Colonic mucosa (tissue), 4 donors: ENCODE measurements at regions of chr18 and their contacts with region 1.

Region 1: DNA sequence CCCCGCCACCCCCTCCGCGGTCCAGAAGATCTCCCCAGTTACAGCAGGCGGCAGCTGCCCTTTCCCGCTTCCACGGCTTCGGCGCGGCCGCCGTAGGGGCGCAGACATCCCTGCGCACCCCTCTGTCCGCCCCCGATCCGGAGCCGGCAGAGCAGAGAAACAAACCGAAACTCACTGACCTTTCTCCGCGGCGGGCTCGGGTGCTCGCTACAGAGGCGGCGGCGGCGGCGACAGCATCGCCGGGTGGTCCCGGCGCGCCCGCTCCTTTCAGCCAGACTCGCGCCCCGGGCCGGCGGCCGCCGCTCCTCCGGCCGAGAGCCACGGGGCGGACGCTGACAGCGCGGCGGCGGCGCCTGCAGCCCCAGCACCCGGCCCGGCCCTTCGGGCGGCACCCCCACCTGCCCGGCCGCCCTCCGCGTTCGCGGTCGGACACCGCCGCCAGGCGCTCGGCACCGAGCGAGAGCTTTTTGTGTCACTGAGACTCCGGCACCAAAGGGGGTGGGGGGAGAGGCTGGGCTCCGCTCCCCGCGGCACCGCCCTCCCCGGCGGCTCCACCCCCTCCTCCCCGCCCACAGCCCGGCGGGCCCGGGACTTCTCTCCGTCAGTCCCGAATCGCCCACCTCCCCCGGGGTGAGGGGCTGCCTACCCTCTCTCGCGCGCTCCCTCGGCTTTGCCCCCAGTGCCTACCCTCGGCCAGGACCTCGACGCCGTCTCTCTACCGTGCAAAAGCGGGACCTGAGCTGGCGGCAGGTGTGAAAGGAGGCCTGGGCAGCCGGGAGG is 1.4 kb upstream of the RNF152 start:
- DNase-seq: peak; percentile 88
- H3K4me3 ChIP-seq: peak overlapping the region; percentile 82
- H3K27ac ChIP-seq: peak overlapping the region; percentile 60
- H3K4me1 ChIP-seq: no peaks in the 10 kb centered on the region
- H3K27me3 ChIP-seq: peaks cover 6% of the 10 kb centered on the region
- CTCF ChIP-seq: no peak

Region 2: DNA sequence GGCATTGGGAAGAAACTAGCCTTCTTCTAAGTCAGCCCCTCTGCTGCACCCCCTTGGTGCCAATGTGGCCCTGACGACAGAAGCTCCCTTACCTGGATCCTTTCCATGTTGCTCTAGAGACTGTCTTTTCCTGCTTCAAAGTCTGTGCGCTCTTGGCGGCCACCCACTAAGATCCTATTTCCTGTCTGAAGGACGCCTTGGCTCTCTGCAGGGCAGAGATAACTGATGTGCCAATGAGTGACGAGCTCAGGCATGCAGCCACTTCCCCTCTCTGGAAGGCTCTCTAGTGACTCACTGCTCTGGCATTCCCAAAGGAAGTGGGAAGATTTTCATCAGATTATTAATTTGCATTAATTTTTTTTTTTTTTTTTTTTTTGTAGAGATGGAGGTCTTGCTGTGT is 287.4 kb before region 1 on chr18:
- intact Hi-C with region 1: no loop called
- DNase-seq: peak; percentile 33
- H3K4me3 ChIP-seq: no peak overlapping the region
- H3K27ac ChIP-seq: no peak overlapping the region
- H3K4me1 ChIP-seq: no peaks in the 10 kb centered on the region
- H3K27me3 ChIP-seq: no peaks in the 10 kb centered on the region
- CTCF ChIP-seq: no peak

Region 3: DNA sequence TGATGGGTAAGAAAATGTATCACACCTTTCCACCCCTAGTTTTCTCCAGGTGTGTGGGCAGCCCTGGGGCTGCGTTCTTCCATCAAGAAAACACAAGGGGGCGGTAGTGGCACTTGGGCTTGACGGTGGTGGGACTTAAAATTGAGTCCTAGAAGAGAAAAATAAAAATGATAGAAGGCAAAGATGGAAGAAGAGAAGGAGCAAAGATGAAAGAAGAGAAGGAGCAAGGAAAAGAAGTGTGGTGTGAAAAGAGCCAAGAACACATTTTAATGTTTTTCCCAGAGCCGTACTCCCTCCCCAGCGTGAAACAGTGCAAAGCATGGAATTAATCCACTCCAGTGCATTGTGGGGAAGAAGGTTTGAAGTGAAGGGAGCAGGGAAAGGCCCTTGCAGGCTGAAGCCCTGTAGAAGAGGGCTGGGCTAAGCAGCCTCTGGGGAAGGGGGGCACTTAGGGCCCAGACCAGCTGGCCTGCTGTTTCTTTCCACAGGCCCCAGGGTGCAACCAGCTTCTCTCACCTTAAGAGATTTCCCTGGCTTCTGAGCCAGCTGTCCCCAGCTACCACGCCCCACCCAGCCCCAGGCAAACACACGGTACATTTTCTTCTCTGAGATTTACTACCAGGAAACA is 258.1 kb before region 1 on chr18:
- intact Hi-C with region 1: loop called (anchors 2 kb)
- DNase-seq: peak; percentile 86
- H3K4me3 ChIP-seq: no peak overlapping the region
- H3K27ac ChIP-seq: peak overlapping the region; percentile 86
- H3K4me1 ChIP-seq: peaks cover 13% of the 10 kb centered on the region
- H3K27me3 ChIP-seq: no peaks in the 10 kb centered on the region
- CTCF ChIP-seq: peak; percentile 78

Region 4: DNA sequence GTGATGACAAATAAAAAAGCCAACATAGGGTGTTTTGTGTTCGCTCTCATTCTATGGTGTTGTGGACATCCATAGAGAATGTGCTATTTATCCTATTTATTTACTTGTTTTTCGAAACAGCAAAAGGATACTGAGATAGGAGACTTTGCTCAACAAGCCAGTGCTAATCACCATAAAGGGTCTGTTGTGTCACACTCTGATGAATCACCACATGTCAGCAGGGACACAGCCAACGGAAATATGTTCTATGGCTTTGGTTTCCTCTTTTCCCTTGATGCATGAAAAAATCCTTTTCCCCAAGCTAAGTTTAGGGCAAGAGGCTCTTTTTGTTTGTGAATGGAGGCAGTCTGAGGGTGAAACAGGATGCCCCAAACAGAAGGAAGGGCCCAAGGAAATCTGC is 155.7 kb before region 1 on chr18:
- intact Hi-C with region 1: loop called (anchors 5 kb)
- DNase-seq: no peak
- H3K4me3 ChIP-seq: no peak overlapping the region
- H3K27ac ChIP-seq: peak overlapping the region; percentile 24
- H3K4me1 ChIP-seq: peaks cover 9% of the 10 kb centered on the region
- H3K27me3 ChIP-seq: no peaks in the 10 kb centered on the region
- CTCF ChIP-seq: no peak

Region 5: DNA sequence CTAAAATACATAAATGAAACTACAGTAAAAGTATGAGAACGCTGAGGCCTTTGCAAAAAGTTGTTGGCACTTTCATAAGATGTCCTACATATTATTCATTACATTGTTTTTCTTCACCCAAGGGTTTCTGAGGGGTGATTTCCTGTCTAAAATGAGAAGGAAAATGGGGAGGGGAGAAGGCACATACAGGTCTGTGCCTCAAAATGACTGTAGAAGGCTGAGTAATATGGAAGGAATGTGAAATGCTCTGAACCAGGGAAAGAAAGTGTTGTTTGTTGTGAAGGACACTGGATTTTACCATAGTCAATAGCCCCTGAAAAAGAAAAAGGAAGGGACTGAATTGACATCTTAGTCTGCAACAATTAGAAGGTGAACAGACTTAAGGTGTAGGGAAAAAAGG is 98.1 kb after region 1 on chr18:
- intact Hi-C with region 1: no loop called
- DNase-seq: no peak
- H3K4me3 ChIP-seq: no peak overlapping the region
- H3K27ac ChIP-seq: no peak overlapping the region
- H3K4me1 ChIP-seq: no peaks in the 10 kb centered on the region
- H3K27me3 ChIP-seq: no peaks in the 10 kb centered on the region
- CTCF ChIP-seq: no peak

Region 6: GRCh38 chr18:62061821-62062478 is 167.8 kb after region 1 on chr18:
- intact Hi-C with region 1: no loop called
- DNase-seq: no peak
- H3K4me3 ChIP-seq: no peak overlapping the region
- H3K27ac ChIP-seq: peak overlapping the region; percentile 59
- H3K4me1 ChIP-seq: no peaks in the 10 kb centered on the region
- H3K27me3 ChIP-seq: no peaks in the 10 kb centered on the region
- CTCF ChIP-seq: no peak